ENCODE measurements at regions of chr20 and their contacts with region 1.

Region 1: DNA sequence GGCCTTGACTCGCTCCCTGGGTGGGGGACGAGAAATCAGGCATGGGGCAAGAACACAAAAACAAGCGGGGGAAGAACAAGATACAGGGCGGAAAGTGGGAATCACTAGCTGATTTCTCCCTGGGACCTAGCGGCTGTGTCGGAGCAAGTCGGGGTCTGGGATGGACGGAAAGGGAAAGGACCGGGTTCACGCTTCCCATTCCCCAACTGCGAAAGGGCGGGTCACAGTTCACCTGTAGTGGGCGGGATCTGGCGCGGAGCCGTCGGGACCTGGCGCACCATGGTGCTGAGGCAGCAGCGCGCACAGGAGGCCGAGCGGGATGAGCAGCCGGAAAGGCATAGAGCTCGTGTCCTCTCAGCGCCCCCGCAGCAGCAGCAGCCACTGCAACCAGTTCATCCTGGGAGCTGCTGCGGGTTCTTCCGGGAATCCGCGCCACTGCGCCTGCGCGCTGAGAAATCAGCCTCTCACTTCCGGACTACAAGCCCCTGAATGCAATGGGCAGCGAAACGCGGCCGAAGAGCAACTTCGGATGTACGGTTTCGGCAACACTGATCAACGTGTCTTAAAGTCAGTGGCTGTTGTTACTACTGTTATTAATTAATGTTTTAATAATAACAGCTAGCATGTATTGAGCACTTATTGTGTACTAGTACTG is at the start of gene EDEM2:
- DNase-seq: peak; percentile 89
- ATAC-seq: peak; percentile 74
- H3K4me3 Mint-ChIP-seq: peak within 1 kb of the TSS; percentile 94
- H3K27ac Mint-ChIP-seq: peak within 1 kb of the TSS; percentile 91
- H3K4me1 Mint-ChIP-seq: peaks cover 48% of the 10 kb centered on the region
- H3K27me3 Mint-ChIP-seq: no peaks in the 10 kb centered on the region
- CTCF ChIP-seq: no peak
- total RNA-seq, gene EDEM2: 23.0 and 24.4 TPM in 2 replicates

Region 2: GRCh38 chr20:34516247-34517113 is 630.6 kb before region 1 on chr20 and contains the start of gene DYNLRB1:
- CTCF ChIA-PET with region 1: no interaction called
- POLR2A ChIA-PET with region 1: no interaction called
- intact Hi-C with region 1: loop called (anchors 5 kb)
- DNase-seq: peak; percentile 88
- ATAC-seq: peak; percentile 82
- H3K4me3 Mint-ChIP-seq: peak within 1 kb of the TSS; percentile 98
- H3K27ac Mint-ChIP-seq: peak within 1 kb of the TSS; percentile 96
- H3K4me1 Mint-ChIP-seq: peaks cover 48% of the 10 kb centered on the region
- H3K27me3 Mint-ChIP-seq: no peaks in the 10 kb centered on the region
- CTCF ChIP-seq: no peak
- total RNA-seq, gene DYNLRB1: 62.7 and 65.9 TPM in 2 replicates

Region 3: GRCh38 chr20:34955232-34956040 is 191.6 kb before region 1 on chr20 and contains the starts of genes GSS and MYH7B:
- CTCF ChIA-PET with region 1: no interaction called
- POLR2A ChIA-PET with region 1: interaction called, 4 read pairs
- intact Hi-C with region 1: loop called (anchors 1 kb)
- DNase-seq: peak; percentile 98
- ATAC-seq: peak; percentile 95
- H3K4me3 Mint-ChIP-seq: peak within 1 kb of the TSS; percentile 97
- H3K27ac Mint-ChIP-seq: peak within 1 kb of the TSS; percentile 83
- H3K4me1 Mint-ChIP-seq: peaks cover 26% of the 10 kb centered on the region
- H3K27me3 Mint-ChIP-seq: no peaks in the 10 kb centered on the region
- CTCF ChIP-seq: no peak
- total RNA-seq, gene GSS: 26.1 and 27.5 TPM in 2 replicates
- total RNA-seq, gene MYH7B: 0.20 and 0.35 TPM in 2 replicates

Region 4: DNA sequence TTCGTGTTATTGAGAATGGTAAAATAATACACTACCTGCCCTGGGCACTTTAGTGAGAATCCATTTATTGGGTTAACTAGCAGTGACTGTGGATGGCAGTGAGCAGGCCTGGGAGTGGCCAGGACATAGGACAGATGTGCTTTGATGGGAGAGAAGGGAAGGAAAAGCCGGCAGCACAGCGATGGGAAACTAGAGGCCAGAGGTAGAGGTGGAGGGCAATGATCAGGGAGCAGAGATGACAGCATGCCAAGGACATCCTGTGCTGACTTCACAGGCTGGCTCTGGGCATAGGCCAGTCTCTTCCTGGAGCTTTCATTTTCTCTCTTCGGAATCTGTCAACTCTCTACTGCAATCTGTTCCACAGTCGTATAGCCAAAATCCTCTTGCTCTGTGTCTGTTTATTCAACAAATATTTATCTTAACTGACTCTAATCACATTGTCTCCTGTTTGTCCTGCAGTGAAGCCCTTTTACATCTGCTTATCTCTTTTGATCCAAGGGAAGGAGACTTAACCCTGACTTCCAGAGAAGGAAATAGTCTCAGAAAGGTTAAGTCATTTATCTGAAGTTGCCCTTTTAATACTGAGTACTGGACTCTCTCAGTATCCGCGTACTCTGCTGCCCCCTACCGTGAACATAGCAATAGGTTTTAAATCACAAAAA is 61.0 kb after region 1 on chr20:
- CTCF ChIA-PET with region 1: interaction called, 4 read pairs
- POLR2A ChIA-PET with region 1: no interaction called
- intact Hi-C with region 1: loop called (anchors 1 kb)
- DNase-seq: peak; percentile 42
- ATAC-seq: peak; percentile 85
- H3K4me3 Mint-ChIP-seq: no peak overlapping the region
- H3K27ac Mint-ChIP-seq: no peak overlapping the region
- H3K4me1 Mint-ChIP-seq: no peaks in the 10 kb centered on the region
- H3K27me3 Mint-ChIP-seq: no peaks in the 10 kb centered on the region
- CTCF ChIP-seq: no peak

Region 5: DNA sequence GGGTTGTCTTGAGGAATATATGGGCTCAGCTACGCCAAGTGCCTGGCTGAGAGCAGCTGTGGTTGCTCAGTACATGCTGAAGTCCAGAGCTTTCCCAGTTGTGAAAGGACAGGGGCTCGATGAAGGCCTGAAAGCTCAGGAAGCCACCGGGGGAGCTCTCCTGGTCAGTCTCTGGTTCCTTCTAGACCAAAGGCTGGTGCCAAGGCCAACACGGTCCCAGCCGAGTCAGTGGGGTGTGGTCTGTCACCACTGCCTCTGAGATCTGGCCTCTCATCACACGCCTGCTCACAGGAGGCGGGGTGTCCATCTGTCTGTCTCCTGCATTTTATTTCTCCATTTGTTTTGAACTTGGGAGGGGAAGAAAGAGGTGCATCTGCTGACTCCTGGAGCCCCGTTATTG is 150.1 kb after region 1 on chr20:
- CTCF ChIA-PET with region 1: no interaction called
- POLR2A ChIA-PET with region 1: no interaction called
- intact Hi-C with region 1: no loop called
- DNase-seq: no peak
- ATAC-seq: no peak
- H3K4me3 Mint-ChIP-seq: no peak overlapping the region
- H3K27ac Mint-ChIP-seq: no peak overlapping the region
- H3K4me1 Mint-ChIP-seq: no peaks in the 10 kb centered on the region
- H3K27me3 Mint-ChIP-seq: peaks cover 10% of the 10 kb centered on the region
- CTCF ChIP-seq: no peak

Region 6: DNA sequence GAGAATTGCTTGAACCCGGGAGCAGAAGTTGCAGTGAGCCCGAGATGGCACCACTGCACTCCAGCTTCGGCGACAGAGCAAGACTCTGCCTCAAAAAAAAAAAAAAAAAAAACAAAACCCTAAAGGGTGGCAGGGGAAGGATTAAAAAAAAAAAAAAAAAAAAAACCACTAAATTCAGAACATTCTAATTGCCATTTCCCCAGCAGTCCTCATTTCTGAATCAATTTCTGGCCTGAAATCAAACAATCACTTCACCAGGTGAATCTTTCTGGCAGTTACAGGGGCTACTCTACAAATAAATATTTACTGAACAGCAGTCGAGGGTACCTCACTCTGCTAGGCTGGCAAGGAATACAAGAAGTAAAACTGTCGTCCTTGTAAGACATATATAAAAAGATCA is 263.6 kb after region 1 on chr20:
- CTCF ChIA-PET with region 1: no interaction called
- POLR2A ChIA-PET with region 1: no interaction called
- intact Hi-C with region 1: loop called (anchors 10 kb)
- DNase-seq: no peak
- ATAC-seq: no peak
- H3K4me3 Mint-ChIP-seq: peak overlapping the region; percentile 97
- H3K27ac Mint-ChIP-seq: no peak overlapping the region
- H3K4me1 Mint-ChIP-seq: peaks cover 19% of the 10 kb centered on the region
- H3K27me3 Mint-ChIP-seq: no peaks in the 10 kb centered on the region
- CTCF ChIP-seq: no peak

Region 7: GRCh38 chr20:36460648-36461599 is 1313.9 kb after region 1 on chr20:
- CTCF ChIA-PET with region 1: no interaction called
- POLR2A ChIA-PET with region 1: no interaction called
- intact Hi-C with region 1: loop called (anchors 5 kb)
- DNase-seq: peak; percentile 85
- ATAC-seq: peak; percentile 75
- H3K4me3 Mint-ChIP-seq: peak overlapping the region; percentile 74
- H3K27ac Mint-ChIP-seq: peak overlapping the region; percentile 91
- H3K4me1 Mint-ChIP-seq: peaks cover 46% of the 10 kb centered on the region
- H3K27me3 Mint-ChIP-seq: no peaks in the 10 kb centered on the region
- CTCF ChIP-seq: no peak

Measured in activated B cell treated with CpG ODN at 0.5 μM for 24 hours (primary cell).